Mammary epithelial cell (primary cell): ENCODE measurements at regions of chr20 and their contacts with region 1.

Region 1: DNA sequence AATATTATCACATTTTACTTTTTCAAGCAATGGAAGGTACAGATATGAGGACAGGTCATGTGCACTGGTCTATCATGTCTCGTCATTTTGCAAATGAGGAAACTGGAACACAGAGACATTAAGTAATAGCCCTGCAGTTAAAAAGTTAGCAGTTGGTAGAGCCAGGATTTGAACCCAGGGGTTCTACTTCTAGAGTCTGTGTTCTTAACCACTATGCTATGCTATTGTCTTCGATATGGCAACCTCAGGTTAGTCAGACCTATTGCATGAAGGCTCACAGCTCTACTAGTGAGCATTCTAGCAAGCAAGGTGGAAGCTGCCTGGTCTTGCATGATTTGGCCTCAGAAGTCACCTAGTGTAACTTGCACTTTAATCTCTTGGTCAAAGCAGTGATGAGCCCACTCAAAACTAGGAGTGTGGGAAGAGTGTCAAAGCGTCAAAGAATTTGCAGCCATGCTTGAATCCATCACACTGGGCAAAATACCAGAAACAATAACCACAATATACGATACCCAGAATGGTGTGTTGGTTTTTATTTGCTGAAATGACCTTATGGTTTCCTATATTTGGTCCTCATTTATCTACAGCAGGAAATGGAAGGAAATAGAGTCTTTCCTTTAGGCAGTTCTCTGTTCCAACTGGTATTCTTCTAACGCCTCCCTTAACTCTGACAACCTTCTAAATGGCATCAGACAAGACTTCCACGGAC is 20.4 kb upstream of the BMP2 start:
- DNase-seq: peak; percentile 90
- H3K4me3 ChIP-seq: no peak overlapping the region
- H3K27ac ChIP-seq: no peak overlapping the region
- H3K4me1 ChIP-seq: no peaks in the 10 kb centered on the region
- H3K27me3 ChIP-seq: no peaks in the 10 kb centered on the region
- CTCF ChIP-seq: no peak

Region 2: DNA sequence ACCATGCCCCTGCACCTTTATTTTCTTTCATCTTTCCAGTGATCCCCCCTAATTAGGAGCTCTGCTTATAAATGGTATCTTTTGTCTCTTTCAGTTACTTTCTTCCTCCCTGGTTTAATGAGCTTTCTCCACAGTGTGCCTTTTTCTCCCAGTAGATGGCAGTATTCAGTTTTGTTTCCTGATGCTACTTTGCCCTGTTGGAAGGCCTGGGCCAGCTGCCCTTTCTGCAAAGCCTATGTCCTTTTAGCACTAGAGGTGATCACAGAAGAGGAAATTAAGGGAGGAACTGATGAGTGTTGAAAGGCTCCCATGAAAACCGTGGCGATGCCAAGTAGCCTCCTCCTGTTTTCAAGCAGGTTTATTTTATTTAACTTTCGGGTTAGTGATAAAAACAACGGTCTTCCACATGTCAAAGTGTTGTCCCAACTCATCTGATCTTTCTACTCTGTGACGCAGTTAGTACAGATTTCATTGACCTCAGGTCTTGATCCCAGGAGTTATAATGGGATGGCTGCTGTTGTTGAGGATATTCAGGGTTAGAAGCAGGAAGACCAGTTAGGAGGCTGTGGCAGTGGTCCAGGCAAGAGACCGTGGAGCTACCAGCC is 163.8 kb before region 1 on chr20:
- CTCF ChIA-PET with region 1: no interaction called
- dilution Hi-C with region 1: no loop called
- in situ Hi-C with region 1: no loop called
- intact Hi-C with region 1: loop called (anchors 5 kb)
- DNase-seq: peak; percentile 58
- H3K4me3 ChIP-seq: no peak overlapping the region
- H3K27ac ChIP-seq: no peak overlapping the region
- H3K4me1 ChIP-seq: peaks cover 10% of the 10 kb centered on the region
- H3K27me3 ChIP-seq: no peaks in the 10 kb centered on the region
- CTCF ChIP-seq: peak; percentile 72 to 80

Region 3: GRCh38 chr20:6651016-6651415 is 96.0 kb before region 1 on chr20:
- CTCF ChIA-PET with region 1: no interaction called
- dilution Hi-C with region 1: no loop called
- in situ Hi-C with region 1: loop called in 1 of 2 experiments (anchors 5 kb)
- intact Hi-C with region 1: loop called (anchors 2 kb)
- DNase-seq: peak; percentile 98
- H3K4me3 ChIP-seq: no peak overlapping the region
- H3K27ac ChIP-seq: peak overlapping the region; percentile 35
- H3K4me1 ChIP-seq: peaks cover 36% of the 10 kb centered on the region
- H3K27me3 ChIP-seq: no peaks in the 10 kb centered on the region
- CTCF ChIP-seq: no peak

Region 4: GRCh38 chr20:6828794-6829423 is 81.9 kb after region 1 on chr20:
- CTCF ChIA-PET with region 1: no interaction called
- dilution Hi-C with region 1: no loop called
- in situ Hi-C with region 1: no loop called
- intact Hi-C with region 1: no loop called
- DNase-seq: peak; percentile 68
- H3K4me3 ChIP-seq: no peak overlapping the region
- H3K27ac ChIP-seq: peak overlapping the region; percentile 39
- H3K4me1 ChIP-seq: peaks cover 11% of the 10 kb centered on the region
- H3K27me3 ChIP-seq: no peaks in the 10 kb centered on the region
- CTCF ChIP-seq: peak; percentile 73 to 76

Region 5: DNA sequence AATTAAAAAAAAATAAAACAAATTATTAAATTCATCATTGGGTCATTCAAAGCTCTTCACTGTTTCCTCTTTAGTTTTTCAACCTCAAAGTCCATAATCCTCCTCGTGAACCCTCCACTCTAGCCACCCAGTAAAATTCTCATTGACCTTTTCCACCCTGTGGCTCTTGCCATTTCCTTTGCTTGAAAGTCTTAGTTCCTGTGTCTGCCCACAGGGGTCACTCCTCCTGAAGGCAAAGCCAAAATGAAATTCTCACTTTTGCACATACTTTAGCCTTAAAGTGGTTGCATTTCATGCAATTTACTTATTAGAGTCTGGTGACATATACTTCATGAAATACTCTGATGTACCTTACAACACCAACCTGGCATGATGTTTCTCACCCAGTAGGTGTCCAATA is 284.2 kb after region 1 on chr20:
- CTCF ChIA-PET with region 1: no interaction called
- dilution Hi-C with region 1: no loop called
- in situ Hi-C with region 1: no loop called
- intact Hi-C with region 1: no loop called
- DNase-seq: no peak
- H3K4me3 ChIP-seq: no peak overlapping the region
- H3K27ac ChIP-seq: no peak overlapping the region
- H3K4me1 ChIP-seq: no peaks in the 10 kb centered on the region
- H3K27me3 ChIP-seq: no peaks in the 10 kb centered on the region
- CTCF ChIP-seq: peak; percentile 29 to 35